ENCODE measurements at regions of chr15 and their contacts with region 1.

Region 1: DNA sequence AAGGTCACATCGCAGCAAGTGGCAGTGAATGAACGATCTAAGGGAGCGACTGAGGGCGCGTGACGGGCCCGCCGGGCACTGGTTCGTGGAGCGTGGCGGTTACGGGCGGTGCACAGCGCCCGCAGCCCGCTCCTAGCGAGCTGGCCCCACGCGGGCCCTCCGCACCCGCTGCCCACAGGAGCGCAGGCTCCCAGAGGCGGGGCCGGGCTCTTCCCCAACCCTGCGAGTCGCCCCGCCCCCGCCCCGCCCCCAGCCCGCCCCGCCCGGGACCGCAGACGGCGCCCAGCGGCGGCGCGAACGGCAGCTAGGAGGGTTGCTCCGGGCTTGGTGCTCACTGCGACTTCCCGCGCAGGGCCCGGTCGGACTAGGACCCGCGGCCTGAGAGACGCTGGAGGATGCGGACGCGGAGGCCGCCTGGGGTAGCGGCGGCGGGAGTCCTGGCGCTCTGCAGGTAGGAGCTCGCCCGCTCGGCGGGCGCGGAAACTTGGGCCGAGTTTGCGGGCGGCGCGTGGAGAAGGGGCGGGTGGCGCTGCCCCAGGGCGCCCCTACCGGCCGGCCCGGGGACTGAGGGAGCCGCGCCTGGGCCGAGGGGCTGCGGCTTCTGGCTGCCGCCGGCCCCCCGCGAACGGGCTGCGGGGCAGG is at the start of gene C15orf39:
- DNase-seq: peak; percentile 76
- H3K4me3 Mint-ChIP-seq: peak within 1 kb of the TSS; percentile 88
- H3K27ac Mint-ChIP-seq: peak within 1 kb of the TSS; percentile 82
- H3K4me1 Mint-ChIP-seq: peaks cover 51% of the 10 kb centered on the region
- H3K27me3 Mint-ChIP-seq: no peaks in the 10 kb centered on the region
- total RNA-seq, gene C15orf39: 62.4 and 63.5 TPM in 2 replicates

Region 2: GRCh38 chr15:74937596-74938296 is 264.0 kb before region 1 on chr15 and contains the start of gene COX5A:
- intact Hi-C with region 1: loop called (anchors 5 kb)
- DNase-seq: peak; percentile 92
- H3K4me3 Mint-ChIP-seq: peak within 1 kb of the TSS; percentile 85
- H3K27ac Mint-ChIP-seq: peak within 1 kb of the TSS; percentile 90
- H3K4me1 Mint-ChIP-seq: peaks cover 20% of the 10 kb centered on the region
- H3K27me3 Mint-ChIP-seq: no peaks in the 10 kb centered on the region
- total RNA-seq, gene COX5A: 311 and 333 TPM in 2 replicates

Region 3: GRCh38 chr15:75029378-75030022 is 172.2 kb before region 1 on chr15:
- intact Hi-C with region 1: loop called (anchors 1 kb)
- DNase-seq: peak; percentile 79
- H3K4me3 Mint-ChIP-seq: no peak overlapping the region
- H3K27ac Mint-ChIP-seq: peak overlapping the region; percentile 48
- H3K4me1 Mint-ChIP-seq: peaks cover 41% of the 10 kb centered on the region
- H3K27me3 Mint-ChIP-seq: no peaks in the 10 kb centered on the region

Region 4: DNA sequence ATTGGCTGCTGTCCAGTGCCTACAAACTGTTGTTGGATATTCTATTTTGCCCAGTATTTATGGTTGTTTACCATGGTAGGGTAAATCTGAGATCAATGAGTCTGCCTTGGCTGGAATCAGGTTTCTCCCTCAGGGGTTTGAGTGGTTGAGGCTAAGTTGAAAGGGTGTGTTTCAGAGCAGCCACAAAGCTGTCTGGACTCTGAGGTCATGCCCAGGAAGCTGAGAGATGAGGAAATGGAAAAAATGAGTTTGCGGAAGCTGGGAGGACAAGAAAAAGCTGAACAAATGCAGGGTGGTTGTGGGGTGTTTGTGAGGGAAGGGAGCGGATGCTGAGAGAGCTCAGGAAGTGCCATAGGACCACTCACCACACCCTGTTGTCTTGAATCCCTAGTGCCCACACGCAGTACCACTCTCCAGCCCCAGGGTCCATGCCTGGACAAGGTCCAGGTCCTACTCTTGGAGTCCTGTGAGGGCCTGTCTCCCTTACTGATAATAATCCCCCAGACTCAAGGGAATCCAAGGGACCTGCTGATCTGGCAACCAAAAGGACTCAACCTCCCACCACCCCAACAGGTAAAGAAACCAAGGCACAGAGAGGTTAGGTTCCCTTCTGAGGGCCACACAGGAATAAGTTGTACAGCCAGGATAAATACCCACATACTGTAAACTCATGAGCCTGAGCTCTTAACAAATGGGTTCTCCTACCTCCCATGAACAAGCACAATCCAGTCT is 96.8 kb before region 1 on chr15:
- intact Hi-C with region 1: loop called (anchors 1 kb)
- DNase-seq: peak; percentile 59
- H3K4me3 Mint-ChIP-seq: no peak overlapping the region
- H3K27ac Mint-ChIP-seq: peak overlapping the region; percentile 84
- H3K4me1 Mint-ChIP-seq: peaks cover 43% of the 10 kb centered on the region
- H3K27me3 Mint-ChIP-seq: no peaks in the 10 kb centered on the region

Region 5: DNA sequence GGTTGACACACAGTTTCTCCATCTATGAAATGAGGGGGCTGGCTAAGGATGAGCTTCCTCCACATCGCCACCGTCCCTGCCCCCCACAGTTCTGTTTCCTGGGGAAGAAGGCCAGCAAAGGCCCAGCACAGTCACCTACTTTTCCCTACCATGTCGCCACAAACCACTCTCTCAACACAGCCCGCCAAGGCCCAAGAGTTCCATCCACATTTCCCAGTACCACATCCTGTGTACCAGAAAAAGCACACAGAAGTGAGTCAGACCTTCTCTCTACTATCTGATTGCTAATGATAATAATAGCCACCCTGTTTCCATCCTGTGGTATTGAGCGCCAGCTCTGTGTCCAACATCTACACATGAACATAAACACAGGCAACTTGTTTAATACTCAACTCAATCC is 30.3 kb before region 1 on chr15:
- intact Hi-C with region 1: loop called (anchors 2 kb)
- DNase-seq: peak; percentile 55
- H3K4me3 Mint-ChIP-seq: peak overlapping the region; percentile 1
- H3K27ac Mint-ChIP-seq: peak overlapping the region; percentile 72
- H3K4me1 Mint-ChIP-seq: peaks cover 60% of the 10 kb centered on the region
- H3K27me3 Mint-ChIP-seq: no peaks in the 10 kb centered on the region

Region 6: DNA sequence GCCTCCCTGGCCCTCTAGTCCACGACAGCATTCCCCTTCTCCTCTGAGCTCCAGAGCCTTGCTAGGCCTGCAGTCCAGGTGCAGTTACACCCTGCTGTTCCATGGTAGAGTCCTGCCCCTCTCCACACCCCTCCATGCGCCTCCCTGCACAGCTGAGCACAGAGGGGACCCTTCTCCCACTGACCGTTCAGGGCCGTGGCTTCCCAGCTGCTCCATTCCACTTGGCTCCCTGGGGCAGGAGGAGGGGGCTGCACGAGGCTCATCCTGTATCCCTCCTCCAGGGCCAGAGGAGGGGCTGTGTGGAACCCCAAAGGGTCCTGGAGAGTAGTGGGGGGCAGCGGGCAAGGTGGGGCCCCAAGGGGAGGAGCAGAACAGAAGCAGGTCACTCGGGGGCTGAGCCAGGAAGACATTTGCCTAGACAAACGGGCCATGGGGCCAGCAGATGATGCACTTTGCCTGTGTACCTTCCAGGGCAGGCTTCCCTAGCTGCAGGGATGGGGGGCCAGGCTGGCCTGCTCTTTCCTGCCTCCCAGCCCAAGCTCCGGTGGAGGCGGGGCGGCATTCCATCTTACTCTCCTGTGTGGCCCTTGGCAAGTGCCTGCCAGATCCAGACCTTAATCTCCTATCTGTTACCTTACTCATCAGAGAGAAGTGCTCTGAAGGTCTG is 35.7 kb after region 1 on chr15:
- intact Hi-C with region 1: no loop called
- DNase-seq: no peak
- H3K4me3 Mint-ChIP-seq: no peak overlapping the region
- H3K27ac Mint-ChIP-seq: no peak overlapping the region
- H3K4me1 Mint-ChIP-seq: no peaks in the 10 kb centered on the region
- H3K27me3 Mint-ChIP-seq: peaks cover 13% of the 10 kb centered on the region

Measured in activated T-helper 2 cell treated with anti-CD3 and anti-CD28 coated beads, Interferon-gamma antibody, Interleukin-2, Interleukin-4, amounts not matched to agents 10 μg/mL and 5 μg/mL and 100 μg/mL, durations not matched to agents 14 hours and 24 hours and 36 hours (primary cell).